ENCODE measurements at regions of chr13 and their contacts with region 1.

Region 1: DNA sequence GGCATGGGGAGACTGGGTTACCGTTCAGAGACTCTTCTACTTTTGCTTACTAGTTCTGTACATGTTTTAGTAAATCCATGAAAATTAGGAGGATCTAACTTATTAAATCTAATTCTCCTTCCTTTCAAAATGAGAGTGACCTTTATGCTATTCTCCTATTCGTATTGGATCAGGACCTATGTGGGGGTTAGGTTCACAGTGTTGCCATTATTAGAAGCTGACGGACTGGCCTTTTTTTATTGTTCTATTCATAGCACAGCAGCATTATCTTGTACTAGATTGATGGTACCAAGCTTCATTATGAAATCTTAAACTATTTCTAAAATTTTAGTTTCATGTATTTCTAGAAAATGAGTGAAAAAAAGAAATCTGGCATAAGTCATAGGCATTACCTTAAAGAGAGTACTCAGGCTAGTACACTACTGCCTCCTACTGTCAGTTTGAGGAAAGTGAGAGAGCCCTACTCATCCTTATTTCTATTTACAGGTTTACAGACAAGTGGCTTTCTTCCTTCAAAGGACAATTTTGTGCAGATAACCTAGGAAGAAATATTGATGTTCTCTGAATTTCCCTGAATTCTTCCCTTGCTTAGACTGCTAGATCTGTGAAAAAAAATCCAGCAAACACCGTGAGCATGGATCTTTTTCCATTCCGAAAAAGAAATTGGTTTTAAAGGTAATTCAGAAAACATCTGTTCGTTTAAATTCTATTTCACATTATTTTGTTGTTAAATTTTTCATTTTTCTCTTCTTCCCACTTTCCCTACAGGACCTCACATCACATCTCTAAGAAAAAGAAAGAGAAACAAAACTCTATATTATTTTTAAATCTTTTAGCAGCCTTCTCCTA is 485.5 kb downstream of the DIAPH3 start:
- DNase-seq: peak; percentile 53
- H3K4me3 Mint-ChIP-seq: no peak overlapping the region
- H3K27ac Mint-ChIP-seq: no peak overlapping the region
- H3K4me1 Mint-ChIP-seq: no peaks in the 10 kb centered on the region
- H3K27me3 Mint-ChIP-seq: no peaks in the 10 kb centered on the region
- CTCF ChIP-seq: peak; percentile 47

Region 2: GRCh38 chr13:59437902-59438301 is 240.3 kb before region 1 on chr13:
- CTCF ChIA-PET with region 1: no interaction called
- POLR2A ChIA-PET with region 1: no interaction called
- intact Hi-C with region 1: no loop called
- DNase-seq: peak; percentile 5
- H3K4me3 Mint-ChIP-seq: no peak overlapping the region
- H3K27ac Mint-ChIP-seq: no peak overlapping the region
- H3K4me1 Mint-ChIP-seq: no peaks in the 10 kb centered on the region
- H3K27me3 Mint-ChIP-seq: peaks cover 13% of the 10 kb centered on the region
- CTCF ChIP-seq: no peak

Region 3: DNA sequence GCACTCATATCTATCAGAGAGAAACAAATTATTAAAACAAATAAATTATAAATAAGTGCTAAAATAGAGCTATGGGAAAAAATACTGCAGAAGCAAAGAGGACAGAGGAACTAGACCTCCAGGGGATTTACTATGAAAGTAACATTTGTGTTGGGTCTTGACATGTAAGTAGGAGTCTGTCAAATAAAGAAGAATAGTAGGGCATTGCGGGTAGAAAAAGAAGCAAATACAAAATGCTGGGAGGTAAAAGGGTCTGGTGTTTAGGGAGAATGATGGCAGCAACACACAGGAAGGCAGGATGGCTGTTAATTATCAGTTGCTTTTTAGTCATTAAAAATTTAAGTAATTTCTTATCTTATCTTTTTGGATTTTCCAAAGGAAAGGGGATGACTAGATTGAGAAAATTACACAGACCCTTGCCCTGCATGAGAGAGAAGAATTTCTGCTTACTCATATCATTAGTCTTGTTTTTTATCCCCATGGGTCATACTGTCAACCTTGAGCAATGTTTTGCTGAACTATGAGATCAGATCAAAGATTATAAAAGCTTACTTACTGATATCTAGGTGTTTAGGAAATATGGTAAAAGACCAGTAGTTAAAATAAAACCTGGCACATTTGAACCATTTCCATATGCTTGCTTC is 12.8 kb after region 1 on chr13:
- CTCF ChIA-PET with region 1: interaction called, 20 read pairs
- POLR2A ChIA-PET with region 1: no interaction called
- intact Hi-C with region 1: no loop called
- DNase-seq: no peak
- H3K4me3 Mint-ChIP-seq: no peak overlapping the region
- H3K27ac Mint-ChIP-seq: no peak overlapping the region
- H3K4me1 Mint-ChIP-seq: no peaks in the 10 kb centered on the region
- H3K27me3 Mint-ChIP-seq: no peaks in the 10 kb centered on the region
- CTCF ChIP-seq: no peak

Region 4: DNA sequence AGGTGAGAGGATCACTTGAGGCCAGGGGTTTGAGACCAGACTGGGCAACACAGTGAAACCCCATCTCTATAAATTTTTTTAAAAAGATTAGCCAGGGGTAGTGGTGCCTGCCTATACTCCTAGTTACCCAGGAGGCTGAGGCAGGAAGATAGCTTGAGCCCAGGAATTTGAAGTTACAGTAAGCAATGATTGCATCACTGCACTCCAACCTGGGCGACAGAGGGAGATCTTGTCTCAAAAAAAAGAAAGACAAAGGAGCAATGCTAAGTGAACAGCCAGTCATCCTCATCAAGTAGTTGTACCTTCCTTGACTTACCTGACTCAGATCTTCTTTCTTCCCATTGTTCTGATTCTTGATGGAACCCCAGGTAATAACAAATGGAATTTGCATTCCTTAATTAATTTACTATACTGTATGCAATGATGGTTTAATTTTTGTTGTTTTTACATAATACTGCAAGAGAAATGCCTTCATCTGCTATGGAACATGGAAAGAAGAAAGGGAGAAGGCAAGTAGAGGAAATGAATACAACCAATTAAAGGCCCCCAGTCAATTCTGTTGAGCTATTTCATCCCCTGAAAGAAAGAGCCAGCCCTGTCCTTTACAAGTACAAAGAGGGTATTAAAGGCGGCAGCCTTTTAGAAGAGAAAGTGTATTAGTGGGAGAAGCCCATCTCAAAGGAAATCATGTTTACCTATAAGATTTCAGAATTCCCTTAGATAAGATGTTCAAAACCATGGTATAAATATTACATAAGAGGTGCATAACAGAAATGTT is 168.8 kb after region 1 on chr13:
- CTCF ChIA-PET with region 1: interaction called, 3 read pairs
- POLR2A ChIA-PET with region 1: no interaction called
- intact Hi-C with region 1: loop called (anchors 10 kb)
- DNase-seq: peak; percentile 45
- H3K4me3 Mint-ChIP-seq: no peak overlapping the region
- H3K27ac Mint-ChIP-seq: no peak overlapping the region
- H3K4me1 Mint-ChIP-seq: no peaks in the 10 kb centered on the region
- H3K27me3 Mint-ChIP-seq: no peaks in the 10 kb centered on the region
- CTCF ChIP-seq: no peak

Region 5: DNA sequence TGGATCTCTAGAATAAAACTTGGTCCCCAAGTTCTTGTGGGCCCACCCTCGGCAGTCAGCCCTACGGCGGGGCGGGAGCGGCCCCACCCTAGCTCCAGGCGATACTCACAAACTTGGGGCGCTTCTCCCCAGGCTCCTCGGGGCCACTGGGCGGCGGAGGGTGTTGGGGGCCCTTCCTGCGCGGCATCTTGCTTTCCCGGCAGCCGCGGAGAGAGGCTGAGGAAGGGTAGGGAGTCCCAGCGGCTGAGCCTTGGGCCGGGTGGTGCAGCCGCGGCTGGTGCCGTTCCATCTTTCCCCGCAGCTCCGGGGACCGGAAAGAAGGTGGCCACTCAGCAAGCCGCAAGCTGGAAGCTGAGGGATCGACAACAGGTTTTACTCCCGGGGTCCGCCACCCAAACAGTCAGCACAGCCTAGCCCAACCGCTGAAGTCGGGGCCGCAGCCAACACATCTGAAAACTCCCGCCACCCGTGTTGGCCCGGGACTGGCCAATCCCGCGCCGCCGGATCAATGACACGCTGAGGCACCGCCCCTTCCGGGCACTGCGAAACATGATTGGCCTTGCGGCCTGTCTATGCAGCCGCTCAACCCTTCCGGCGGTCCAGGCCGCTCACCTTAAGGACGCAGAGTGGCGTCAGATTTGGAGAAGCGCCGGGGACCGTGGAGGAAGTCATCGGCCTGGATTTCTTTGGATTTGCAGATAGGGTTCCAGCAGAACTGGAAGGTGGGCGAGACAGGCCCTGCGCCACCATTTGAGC is 485.5 kb after region 1 on chr13 and contains the start of gene DIAPH3:
- CTCF ChIA-PET with region 1: interaction called, 3 read pairs
- POLR2A ChIA-PET with region 1: no interaction called
- intact Hi-C with region 1: loop called (anchors 2 kb)
- DNase-seq: peak; percentile 96
- H3K4me3 Mint-ChIP-seq: peak within 1 kb of the TSS; percentile 94
- H3K27ac Mint-ChIP-seq: peak within 1 kb of the TSS; percentile 77
- H3K4me1 Mint-ChIP-seq: peaks cover 39% of the 10 kb centered on the region
- H3K27me3 Mint-ChIP-seq: no peaks in the 10 kb centered on the region
- CTCF ChIP-seq: no peak
- total RNA-seq, gene DIAPH3: 21.2 and 34.7 TPM in 2 replicates

Region 6: DNA sequence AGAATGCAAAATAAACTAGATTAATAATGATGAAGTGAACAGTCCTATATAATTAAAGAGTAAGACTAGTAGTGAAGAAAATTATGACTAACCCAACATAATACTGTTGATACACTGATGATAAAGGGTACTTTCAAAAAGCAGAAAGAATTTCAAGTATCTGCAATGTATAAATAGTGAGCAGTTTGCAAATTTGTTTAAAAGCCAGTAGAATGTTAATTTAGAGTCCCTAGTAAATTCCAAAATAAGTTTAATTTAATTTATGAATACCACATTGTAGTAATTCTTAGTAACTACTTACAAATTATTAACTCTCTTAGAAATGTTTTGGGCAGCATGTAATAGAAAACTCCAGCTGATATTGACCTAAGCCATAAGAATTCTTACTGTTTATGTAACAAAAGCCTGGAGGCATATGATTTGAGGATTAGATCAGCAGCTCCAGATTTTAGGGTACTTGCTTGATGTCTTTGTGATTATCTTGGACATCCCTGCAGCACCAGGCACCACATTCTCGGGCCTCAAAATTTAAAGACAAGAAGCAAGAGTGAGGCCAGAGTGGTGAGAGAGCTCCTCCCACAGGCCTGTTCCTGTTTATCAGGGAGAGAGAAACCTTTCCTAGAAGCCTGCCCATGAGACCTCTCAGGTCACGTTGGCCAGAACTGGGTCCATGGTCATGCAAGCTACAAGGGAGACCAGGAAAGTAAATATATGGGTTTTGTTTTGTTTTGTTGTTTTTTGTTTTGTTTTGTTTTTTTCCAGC is 651.2 kb after region 1 on chr13:
- CTCF ChIA-PET with region 1: interaction called, 61 read pairs
- POLR2A ChIA-PET with region 1: no interaction called
- intact Hi-C with region 1: loop called (anchors 2 kb)
- DNase-seq: peak; percentile 53
- H3K4me3 Mint-ChIP-seq: no peak overlapping the region
- H3K27ac Mint-ChIP-seq: no peak overlapping the region
- H3K4me1 Mint-ChIP-seq: no peaks in the 10 kb centered on the region
- H3K27me3 Mint-ChIP-seq: peaks cover 29% of the 10 kb centered on the region
- CTCF ChIP-seq: peak; percentile 62

Measured in MCF 10A (cell line).